CD4-positive, alpha-beta memory T cell (primary cell): ENCODE measurements at regions of chr2 and their contacts with region 1.

Region 1: GRCh38 chr2:38740851-38741731 is 10.1 kb downstream of the SRSF7 start:
- DNase-seq: peak; percentile 60 to 71 (median 65)
- H3K4me3 ChIP-seq: no peak overlapping the region
- H3K4me3 Mint-ChIP-seq: peak overlapping the region in 4 of 8 donors; percentile 15 to 39 (median 27)
- H3K27ac ChIP-seq: no peak overlapping the region
- H3K27ac Mint-ChIP-seq: peak overlapping the region; percentile 30 to 99 (median 83)
- H3K4me1 ChIP-seq: peaks cover 54% of the 10 kb centered on the region
- H3K4me1 Mint-ChIP-seq: peaks cover 31 to 78% (median 44%) of the 10 kb centered on the region in 4 donors
- H3K27me3 ChIP-seq: no peaks in the 10 kb centered on the region
- H3K27me3 Mint-ChIP-seq: no peaks in the 10 kb centered on the region

Region 2: DNA sequence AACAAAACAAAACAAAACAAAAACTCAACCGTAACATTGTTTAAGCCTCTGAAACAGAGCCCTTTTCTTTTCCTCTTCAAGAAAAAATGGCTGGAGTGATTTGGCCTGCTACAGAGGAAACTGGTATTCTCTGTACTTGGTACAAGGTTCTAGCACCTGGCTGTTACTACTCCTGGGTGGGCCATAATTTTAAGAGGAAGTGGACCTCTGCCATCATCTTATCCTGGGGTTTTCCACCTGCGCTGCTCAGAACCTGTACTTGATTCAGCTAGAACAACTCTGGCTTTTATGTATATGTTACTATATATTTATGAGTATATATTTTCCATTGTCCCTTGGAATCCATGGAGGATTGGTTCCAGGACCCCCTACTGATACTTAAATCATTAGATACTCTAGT is 12.4 kb before region 1 on chr2:
- CTCF ChIA-PET with region 1: interaction called, 20 read pairs
- POLR2A ChIA-PET with region 1: interaction called, 16 read pairs
- intact Hi-C with region 1: loop called (anchors 1 kb)
- DNase-seq: no peak
- H3K4me3 ChIP-seq: no peak overlapping the region
- H3K4me3 Mint-ChIP-seq: no peak overlapping the region
- H3K27ac ChIP-seq: no peak overlapping the region
- H3K27ac Mint-ChIP-seq: peak overlapping the region in 2 of 7 donors; percentile 10 to 53
- H3K4me1 ChIP-seq: peaks cover 21% of the 10 kb centered on the region
- H3K4me1 Mint-ChIP-seq: peaks cover 10 to 24% (median 18%) of the 10 kb centered on the region in 4 donors
- H3K27me3 ChIP-seq: no peaks in the 10 kb centered on the region
- H3K27me3 Mint-ChIP-seq: no peaks in the 10 kb centered on the region

Region 3: GRCh38 chr2:39778962-39779851 is 1038.1 kb after region 1 on chr2 and contains the start of gene THUMPD2:
- CTCF ChIA-PET with region 1: no interaction called
- POLR2A ChIA-PET with region 1: no interaction called
- intact Hi-C with region 1: no loop called
- DNase-seq: peak; percentile 44 to 60 (median 56)
- H3K4me3 ChIP-seq: peak within 1 kb of the TSS; percentile 83 to 89
- H3K4me3 Mint-ChIP-seq: peak within 1 kb of the TSS; percentile 92 to 98 (median 94)
- H3K27ac ChIP-seq: peak within 1 kb of the TSS; percentile 53
- H3K27ac Mint-ChIP-seq: peak within 1 kb of the TSS; percentile 22 to 96 (median 90)
- H3K4me1 ChIP-seq: peaks cover 48% of the 10 kb centered on the region
- H3K4me1 Mint-ChIP-seq: peaks cover 37 to 59% (median 51%) of the 10 kb centered on the region in 4 donors
- H3K27me3 ChIP-seq: no peaks in the 10 kb centered on the region
- H3K27me3 Mint-ChIP-seq: no peaks in the 10 kb centered on the region
- total RNA-seq, gene THUMPD2: 7.2 to 11.6 TPM